ENCODE measurements at regions of chr7 and their contacts with region 1.

Region 1: GRCh38 chr7:150988230-150989226 is 2.3 kb upstream of the NOS3 start:
- DNase-seq: peak; percentile 37
- ATAC-seq: peak; percentile 55
- H3K4me3 ChIP-seq: no peak overlapping the region
- H3K27ac ChIP-seq: no peak overlapping the region
- H3K4me1 ChIP-seq: peaks cover 6% of the 10 kb centered on the region
- H3K27me3 ChIP-seq: no peaks in the 10 kb centered on the region
- CTCF ChIP-seq: peak; percentile 68

Region 2: GRCh38 chr7:150778738-150779301 is 209.7 kb before region 1 on chr7:
- CTCF ChIA-PET with region 1: no interaction called
- POLR2A ChIA-PET with region 1: no interaction called
- intact Hi-C with region 1: loop called (anchors 5 kb)
- DNase-seq: peak; percentile 78
- ATAC-seq: peak; percentile 96
- H3K4me3 ChIP-seq: no peak overlapping the region
- H3K27ac ChIP-seq: no peak overlapping the region
- H3K4me1 ChIP-seq: no peaks in the 10 kb centered on the region
- H3K27me3 ChIP-seq: peaks cover 44% of the 10 kb centered on the region
- CTCF ChIP-seq: peak; percentile 89

Region 3: GRCh38 chr7:150898475-150899011 is 90.0 kb before region 1 on chr7:
- CTCF ChIA-PET with region 1: interaction called, 6 read pairs
- POLR2A ChIA-PET with region 1: no interaction called
- intact Hi-C with region 1: loop called (anchors 2 kb)
- DNase-seq: peak; percentile 72
- ATAC-seq: peak; percentile 83
- H3K4me3 ChIP-seq: no peak overlapping the region
- H3K27ac ChIP-seq: no peak overlapping the region
- H3K4me1 ChIP-seq: peaks cover 16% of the 10 kb centered on the region
- H3K27me3 ChIP-seq: no peaks in the 10 kb centered on the region
- CTCF ChIP-seq: peak; percentile 91

Region 4: DNA sequence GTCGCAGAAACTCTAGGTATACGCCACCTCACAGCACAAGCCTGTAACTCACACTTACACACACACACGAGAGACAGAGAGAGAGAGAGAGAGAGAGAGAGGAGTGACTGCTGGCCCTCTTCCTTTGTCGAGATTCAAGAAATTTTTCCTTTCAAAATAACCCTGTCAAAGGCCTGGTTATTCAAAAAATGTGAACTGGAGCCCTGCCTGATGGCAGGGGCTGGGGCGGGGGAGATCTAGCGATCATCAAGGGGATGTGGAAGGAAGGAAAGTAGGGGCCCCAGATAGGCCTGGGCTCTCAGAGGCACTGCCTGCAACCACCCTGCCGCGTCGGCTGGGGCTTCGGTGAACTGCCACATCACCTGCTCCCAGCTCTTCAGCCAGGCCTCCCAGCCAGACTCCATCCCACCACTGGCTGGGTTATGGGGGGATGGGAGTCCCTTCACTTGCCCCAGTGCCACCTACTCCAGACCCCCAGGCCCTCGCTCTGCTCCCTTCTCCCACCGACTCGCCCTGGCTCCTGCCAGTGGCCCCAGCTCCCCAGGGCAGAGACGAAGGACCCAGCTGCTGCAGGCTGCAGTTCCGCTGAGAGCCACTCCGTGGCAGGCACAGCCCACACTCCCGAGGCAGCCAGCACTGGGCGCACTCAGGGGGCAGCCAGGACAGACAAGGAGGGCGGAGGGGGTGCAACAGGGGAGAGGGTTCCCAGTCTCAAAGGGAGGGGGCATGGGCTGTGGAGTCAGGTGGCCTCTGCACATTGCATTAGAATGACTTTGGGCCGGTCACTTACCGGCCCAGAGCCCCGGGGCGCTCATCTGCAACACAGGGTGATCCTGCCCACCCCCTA is 25.8 kb before region 1 on chr7:
- CTCF ChIA-PET with region 1: interaction called, 10 read pairs
- POLR2A ChIA-PET with region 1: no interaction called
- intact Hi-C with region 1: no loop called
- DNase-seq: peak; percentile 39
- ATAC-seq: peak; percentile 86
- H3K4me3 ChIP-seq: no peak overlapping the region
- H3K27ac ChIP-seq: no peak overlapping the region
- H3K4me1 ChIP-seq: no peaks in the 10 kb centered on the region
- H3K27me3 ChIP-seq: peaks cover 6% of the 10 kb centered on the region; the same call in 1 of the 2 replicates
- CTCF ChIP-seq: peak; percentile 87

Region 5: GRCh38 chr7:150974468-150975391 is 13.8 kb before region 1 on chr7:
- CTCF ChIA-PET with region 1: interaction called, 3 read pairs
- POLR2A ChIA-PET with region 1: interaction called, 19 read pairs
- intact Hi-C with region 1: no loop called
- DNase-seq: peak; percentile 36
- ATAC-seq: peak; percentile 53
- H3K4me3 ChIP-seq: peak overlapping the region; percentile 71
- H3K27ac ChIP-seq: no peak overlapping the region
- H3K4me1 ChIP-seq: no peaks in the 10 kb centered on the region; the same call in 1 of the 2 replicates
- H3K27me3 ChIP-seq: peaks cover 11% of the 10 kb centered on the region
- CTCF ChIP-seq: peak; percentile 29; the same call in 1 of the 2 replicates

Region 6: DNA sequence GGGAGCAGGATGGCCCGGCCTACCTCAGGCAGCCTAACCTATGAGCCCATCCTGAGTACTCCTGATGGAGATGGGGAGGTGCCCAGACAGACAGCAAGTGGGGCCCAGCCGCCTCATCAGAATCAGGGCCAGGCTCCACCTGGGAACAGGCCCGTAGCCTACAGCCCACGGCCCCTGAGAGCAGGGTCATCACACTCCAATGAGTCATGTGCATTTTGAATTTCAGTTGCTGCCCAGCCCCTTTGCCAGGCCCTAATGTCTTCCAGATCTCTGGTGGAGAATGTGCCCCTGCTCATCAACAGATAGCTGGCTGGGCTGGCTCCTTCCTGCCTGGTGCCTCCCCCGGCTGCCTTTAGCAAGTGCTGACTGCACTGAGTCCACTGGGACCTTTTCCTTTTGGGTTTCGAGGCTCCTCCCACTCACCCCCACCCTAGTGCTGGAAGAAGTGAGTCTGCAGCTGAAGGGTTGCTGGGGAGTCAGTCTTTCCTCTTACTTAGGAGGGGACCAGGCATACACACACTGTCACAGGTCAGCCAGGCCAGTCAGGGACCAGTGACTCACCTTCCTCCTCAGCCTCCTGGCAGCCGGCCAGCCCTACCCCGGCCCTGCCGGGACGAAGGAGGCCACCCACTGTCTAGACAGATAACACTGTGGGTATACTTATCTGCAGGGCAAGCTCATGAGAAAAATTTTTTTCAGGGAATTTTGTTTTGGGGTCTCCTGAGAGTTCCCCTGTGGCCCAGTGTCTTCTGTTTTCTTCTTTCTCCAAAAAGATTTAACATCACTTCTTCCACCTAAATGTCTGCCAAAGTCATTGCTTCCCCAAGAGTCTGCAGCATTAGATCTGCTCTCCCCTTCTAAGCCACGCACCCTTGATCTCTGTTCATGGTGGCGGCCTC is 50.7 kb after region 1 on chr7:
- CTCF ChIA-PET with region 1: no interaction called
- POLR2A ChIA-PET with region 1: no interaction called
- intact Hi-C with region 1: no loop called
- DNase-seq: peak; percentile 80
- ATAC-seq: peak; percentile 92
- H3K4me3 ChIP-seq: no peak overlapping the region
- H3K27ac ChIP-seq: peak overlapping the region; percentile 70
- H3K4me1 ChIP-seq: peaks cover 18% of the 10 kb centered on the region
- H3K27me3 ChIP-seq: no peaks in the 10 kb centered on the region
- CTCF ChIP-seq: no peak

Region 7: DNA sequence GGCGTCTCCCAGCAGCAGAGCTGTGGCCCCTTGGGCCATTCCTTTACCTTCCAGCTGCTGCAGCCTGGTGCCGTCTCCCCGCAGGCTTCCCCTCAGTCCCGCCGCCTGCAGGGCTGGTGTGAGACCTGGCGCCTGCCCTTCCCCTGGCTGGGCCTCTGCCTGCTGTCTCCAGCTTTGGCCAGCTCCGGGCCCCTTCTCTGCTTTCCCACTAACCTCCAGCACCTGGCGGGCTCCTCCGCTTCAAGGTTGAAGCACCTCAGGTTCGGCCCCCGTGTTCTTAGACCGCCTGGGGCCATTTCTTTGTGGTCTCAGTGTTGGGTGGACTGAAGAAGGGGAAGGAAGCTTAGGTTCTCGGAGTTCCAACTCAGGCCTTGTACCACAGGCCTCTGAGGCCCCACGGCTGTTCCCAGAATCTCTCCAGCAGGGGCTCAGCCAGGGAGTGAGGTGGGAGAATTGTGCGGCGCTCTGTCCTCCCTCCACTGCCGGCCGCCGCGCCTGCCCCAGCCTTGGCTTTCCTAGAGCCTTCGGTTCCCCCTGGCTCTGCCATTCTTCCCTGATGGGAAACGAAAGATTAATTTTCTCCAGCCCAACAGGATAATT is 148.6 kb after region 1 on chr7:
- CTCF ChIA-PET with region 1: no interaction called
- POLR2A ChIA-PET with region 1: no interaction called
- intact Hi-C with region 1: no loop called
- DNase-seq: no peak
- ATAC-seq: no peak
- H3K4me3 ChIP-seq: no peak overlapping the region
- H3K27ac ChIP-seq: no peak overlapping the region
- H3K4me1 ChIP-seq: no peaks in the 10 kb centered on the region
- H3K27me3 ChIP-seq: no peaks in the 10 kb centered on the region
- CTCF ChIP-seq: no peak

Measured in PC-3 (cell line).